BJ (cell line): ENCODE measurements at regions of chr7 and their contacts with region 1.

Region 1: DNA sequence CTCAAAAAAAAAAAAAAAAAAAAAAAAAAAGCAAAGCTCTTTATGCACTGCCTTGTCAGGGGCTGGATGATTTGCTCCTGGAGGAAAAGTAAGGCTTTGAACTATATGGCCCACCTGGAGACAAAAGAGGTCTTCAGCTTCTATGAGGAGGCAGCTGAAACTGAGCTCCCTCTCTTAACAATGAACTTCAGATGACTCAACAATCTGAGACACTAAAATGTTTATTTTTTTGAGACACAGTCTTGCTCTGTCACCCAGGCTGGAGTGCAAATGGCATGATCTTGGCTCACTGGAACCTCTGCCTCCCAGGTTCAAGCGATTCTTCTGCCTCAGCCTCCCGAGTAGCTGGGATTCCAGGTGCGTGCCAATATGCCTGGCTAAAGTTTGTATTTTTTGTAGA is 36.7 kb downstream of the RAB19 start:
- DNase-seq: no peak
- H3K4me3 ChIP-seq: no peak overlapping the region
- H3K27me3 ChIP-seq: no peaks in the 10 kb centered on the region
- CTCF ChIP-seq: no peak

Region 2: GRCh38 chr7:140463111-140463510 is 22.5 kb after region 1 on chr7:
- CTCF ChIA-PET with region 1: no interaction called
- POLR2A ChIA-PET with region 1: no interaction called
- DNase-seq: no peak
- H3K4me3 ChIP-seq: no peak overlapping the region
- H3K27me3 ChIP-seq: no peaks in the 10 kb centered on the region
- CTCF ChIP-seq: no peak

Region 3: GRCh38 chr7:140525743-140526142 is 85.2 kb after region 1 on chr7:
- CTCF ChIA-PET with region 1: no interaction called
- POLR2A ChIA-PET with region 1: no interaction called
- DNase-seq: peak; percentile 12
- H3K4me3 ChIP-seq: no peak overlapping the region
- H3K27me3 ChIP-seq: no peaks in the 10 kb centered on the region
- CTCF ChIP-seq: no peak

Region 4: DNA sequence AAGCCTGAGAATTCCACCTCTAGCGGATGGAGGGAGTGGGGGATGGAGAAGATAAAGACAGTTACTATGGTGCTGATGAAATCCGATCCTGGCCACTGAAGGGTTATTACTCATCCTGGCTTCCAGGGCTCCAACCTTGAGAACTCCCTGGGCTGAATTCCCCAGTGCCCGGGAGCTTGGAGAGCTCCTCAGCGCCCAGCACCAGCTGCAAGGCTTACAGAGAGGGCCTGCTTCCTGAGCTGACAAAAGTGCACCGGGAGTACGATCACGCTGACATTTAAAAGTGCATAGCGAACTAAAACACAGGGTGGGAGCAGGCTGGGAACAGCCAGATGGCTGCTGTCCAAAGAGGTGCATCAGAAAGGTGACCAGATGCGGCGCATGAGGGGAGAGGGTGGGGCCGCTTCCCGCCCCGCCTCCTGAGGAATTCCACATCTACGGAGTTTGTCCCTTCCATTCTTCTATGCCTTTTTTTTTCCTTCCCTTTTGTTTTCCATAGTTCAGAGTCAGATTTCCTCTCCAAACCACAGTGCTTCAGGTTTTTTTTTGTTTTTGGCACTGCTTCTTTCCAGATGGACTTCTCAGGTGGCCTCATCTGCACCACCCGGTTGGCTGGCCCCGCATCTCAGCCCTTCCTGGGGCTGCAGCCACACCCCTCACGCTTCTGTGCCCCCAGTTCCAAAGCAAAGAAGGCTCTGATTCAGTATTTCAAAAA is 101.1 kb after region 1 on chr7:
- CTCF ChIA-PET with region 1: no interaction called
- POLR2A ChIA-PET with region 1: interaction called, 12 read pairs
- DNase-seq: no peak
- H3K4me3 ChIP-seq: 0 out of 2 replicates have a peak overlapping the region, but pooled peaks have one; percentile 3
- H3K27me3 ChIP-seq: no peaks in the 10 kb centered on the region
- CTCF ChIP-seq: no peak